Activated CD4-positive, alpha-beta T cell treated with anti-CD3 and anti-CD28 coated beads for 36 hours (primary cell): ENCODE measurements at regions of chr10 and their contacts with region 1.

Region 1: GRCh38 chr10:103685880-103686669 is 169.3 kb downstream of the SH3PXD2A start:
- DNase-seq: peak; percentile 88
- ATAC-seq: peak; percentile 95
- H3K4me3 Mint-ChIP-seq: no peak overlapping the region
- H3K27ac Mint-ChIP-seq: no peak overlapping the region
- H3K4me1 Mint-ChIP-seq: peaks cover under 1% of the 10 kb centered on the region
- H3K27me3 Mint-ChIP-seq: no peaks in the 10 kb centered on the region

Region 2: GRCh38 chr10:103592186-103593021 is 93.7 kb before region 1 on chr10:
- CTCF ChIA-PET with region 1: interaction called, 25 read pairs
- POLR2A ChIA-PET with region 1: no interaction called
- intact Hi-C with region 1: no loop called
- DNase-seq: peak; percentile 72
- ATAC-seq: peak; percentile 90
- H3K4me3 Mint-ChIP-seq: no peak overlapping the region
- H3K27ac Mint-ChIP-seq: no peak overlapping the region
- H3K4me1 Mint-ChIP-seq: peaks cover 3% of the 10 kb centered on the region
- H3K27me3 Mint-ChIP-seq: no peaks in the 10 kb centered on the region

Region 3: DNA sequence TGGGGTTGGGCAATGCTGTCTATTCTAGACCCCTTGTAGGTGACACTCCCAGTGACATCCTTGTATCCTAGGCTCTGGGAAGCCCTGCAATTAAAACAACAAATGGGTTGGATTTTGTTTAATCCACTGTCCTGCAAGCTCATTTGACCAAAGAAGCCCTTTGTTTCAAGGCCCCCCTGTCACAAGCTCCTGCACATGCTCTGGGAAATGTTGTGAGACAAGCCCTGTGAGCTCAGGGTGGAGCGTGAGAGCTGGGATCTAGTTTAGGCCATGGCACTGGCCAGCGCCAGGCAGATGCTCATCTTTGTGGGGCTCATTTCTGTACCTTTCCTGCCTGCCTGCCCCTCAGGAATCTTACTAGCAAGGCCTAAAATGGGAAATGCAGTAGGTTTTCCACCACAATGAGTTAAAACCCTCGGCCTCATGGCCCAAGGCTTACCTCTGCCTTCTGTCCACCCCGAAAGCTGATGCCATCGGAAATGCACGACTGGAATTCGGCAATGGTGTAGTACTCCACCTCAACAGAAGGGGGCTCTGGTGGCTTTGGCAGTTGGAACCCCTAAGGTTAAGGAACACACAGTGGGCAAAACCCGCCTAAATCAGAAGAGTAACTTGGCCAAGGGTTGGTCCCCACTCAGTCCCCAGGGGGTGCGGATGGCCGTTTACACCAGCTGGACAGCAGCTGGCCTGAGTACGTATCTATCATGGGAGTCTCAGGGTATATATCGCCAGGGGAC is 80.5 kb before region 1 on chr10:
- CTCF ChIA-PET with region 1: interaction called, 52 read pairs
- POLR2A ChIA-PET with region 1: no interaction called
- intact Hi-C with region 1: loop called (anchors 1 kb)
- DNase-seq: peak; percentile 66
- ATAC-seq: peak; percentile 53
- H3K4me3 Mint-ChIP-seq: no peak overlapping the region
- H3K27ac Mint-ChIP-seq: no peak overlapping the region
- H3K4me1 Mint-ChIP-seq: no peaks in the 10 kb centered on the region
- H3K27me3 Mint-ChIP-seq: no peaks in the 10 kb centered on the region

Region 4: DNA sequence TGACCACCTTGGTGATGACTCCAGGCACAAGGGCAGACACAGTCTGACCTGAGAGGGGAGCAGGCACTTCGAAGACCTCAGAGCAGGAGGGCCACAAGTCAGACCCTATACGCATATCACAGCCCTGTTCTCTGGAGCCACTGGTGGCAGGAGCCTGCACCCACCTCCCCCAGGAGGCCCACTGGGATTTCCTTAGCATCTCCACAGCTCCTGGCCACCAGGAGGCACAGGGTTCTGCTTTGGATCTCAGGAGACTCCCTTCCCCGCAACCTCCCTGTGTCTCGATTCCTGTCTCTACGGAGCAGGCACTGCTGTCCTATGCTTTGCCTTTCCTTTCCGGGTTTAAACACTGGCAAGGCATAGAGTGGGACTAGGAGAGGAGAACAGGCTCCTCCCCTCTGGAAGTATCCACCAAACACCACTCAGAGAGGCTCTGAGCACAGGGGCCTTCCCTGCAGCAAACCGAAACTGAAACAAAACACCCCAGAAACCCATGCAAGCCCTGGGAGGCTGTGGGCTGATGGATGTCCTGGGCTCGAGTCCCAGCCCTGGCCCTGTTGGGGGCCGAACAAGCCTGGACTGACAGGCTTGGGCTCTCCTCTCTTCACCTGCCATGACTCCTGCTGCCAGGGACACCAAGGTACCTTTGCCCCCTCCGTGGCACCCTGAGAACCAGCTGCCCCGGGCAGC is 26.3 kb before region 1 on chr10:
- CTCF ChIA-PET with region 1: interaction called, 14 read pairs
- POLR2A ChIA-PET with region 1: no interaction called
- intact Hi-C with region 1: no loop called
- DNase-seq: peak; percentile 74
- ATAC-seq: peak; percentile 94
- H3K4me3 Mint-ChIP-seq: peak overlapping the region; percentile 83
- H3K27ac Mint-ChIP-seq: peak overlapping the region; percentile 87
- H3K4me1 Mint-ChIP-seq: peaks cover 5% of the 10 kb centered on the region
- H3K27me3 Mint-ChIP-seq: no peaks in the 10 kb centered on the region

Region 5: DNA sequence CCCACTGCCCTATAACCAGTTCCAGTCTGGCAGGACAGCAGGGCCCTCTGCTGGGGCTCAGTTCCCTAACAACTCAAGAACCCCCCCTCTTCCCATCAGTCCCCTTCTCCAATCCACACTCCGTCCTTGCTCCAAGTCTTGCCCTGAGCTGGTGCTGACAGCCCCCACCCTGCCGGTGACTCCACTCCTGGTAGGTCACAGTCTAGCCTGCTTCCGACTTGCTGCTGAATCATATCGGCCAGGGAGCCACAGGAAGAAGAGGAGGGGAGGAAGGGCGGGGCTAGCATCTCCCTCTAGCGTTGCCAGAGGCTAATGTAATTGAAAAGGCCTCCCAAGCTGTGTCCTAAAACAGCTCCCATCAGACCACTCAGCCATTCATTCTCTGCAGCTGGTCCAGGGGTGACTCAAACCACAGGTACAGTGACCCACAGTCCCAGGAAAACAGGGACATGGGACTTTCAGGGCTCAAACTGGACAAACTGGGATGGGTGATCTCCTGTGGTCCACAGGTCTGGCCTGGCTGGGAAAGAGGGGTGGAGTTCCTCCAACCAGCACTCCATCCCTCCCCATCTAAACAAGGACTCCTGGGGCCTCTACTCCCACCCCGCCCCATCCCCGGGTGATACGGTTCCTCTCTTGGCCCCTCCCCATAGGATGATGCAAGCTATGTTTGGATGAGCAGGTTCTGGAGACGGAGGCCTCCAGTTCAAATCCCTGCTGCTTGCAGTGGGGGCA is 10.5 kb after region 1 on chr10:
- CTCF ChIA-PET with region 1: interaction called, 12 read pairs
- POLR2A ChIA-PET with region 1: no interaction called
- intact Hi-C with region 1: no loop called
- DNase-seq: peak; percentile 90
- ATAC-seq: peak; percentile 94
- H3K4me3 Mint-ChIP-seq: peak overlapping the region; percentile 33
- H3K27ac Mint-ChIP-seq: peak overlapping the region; percentile 71
- H3K4me1 Mint-ChIP-seq: peaks cover 31% of the 10 kb centered on the region
- H3K27me3 Mint-ChIP-seq: peaks cover 2% of the 10 kb centered on the region

Region 6: GRCh38 chr10:103828107-103828506 is 142.0 kb after region 1 on chr10:
- CTCF ChIA-PET with region 1: no interaction called
- POLR2A ChIA-PET with region 1: no interaction called
- intact Hi-C with region 1: no loop called
- DNase-seq: no peak
- ATAC-seq: no peak
- H3K4me3 Mint-ChIP-seq: no peak overlapping the region
- H3K27ac Mint-ChIP-seq: no peak overlapping the region
- H3K4me1 Mint-ChIP-seq: no peaks in the 10 kb centered on the region
- H3K27me3 Mint-ChIP-seq: no peaks in the 10 kb centered on the region